Cardiac septum (tissue), 1 donor: ENCODE measurements at regions of chr2 and their contacts with region 1.

Region 1: GRCh38 chr2:73212448-73213176 is 1.4 kb upstream of the SMYD5 start:
- DNase-seq: peak; percentile 82

Region 2: GRCh38 chr2:73176881-73177644 is 35.5 kb before region 1 on chr2:
- intact Hi-C with region 1: loop called (anchors 5 kb)
- DNase-seq: peak; percentile 92

Region 3: DNA sequence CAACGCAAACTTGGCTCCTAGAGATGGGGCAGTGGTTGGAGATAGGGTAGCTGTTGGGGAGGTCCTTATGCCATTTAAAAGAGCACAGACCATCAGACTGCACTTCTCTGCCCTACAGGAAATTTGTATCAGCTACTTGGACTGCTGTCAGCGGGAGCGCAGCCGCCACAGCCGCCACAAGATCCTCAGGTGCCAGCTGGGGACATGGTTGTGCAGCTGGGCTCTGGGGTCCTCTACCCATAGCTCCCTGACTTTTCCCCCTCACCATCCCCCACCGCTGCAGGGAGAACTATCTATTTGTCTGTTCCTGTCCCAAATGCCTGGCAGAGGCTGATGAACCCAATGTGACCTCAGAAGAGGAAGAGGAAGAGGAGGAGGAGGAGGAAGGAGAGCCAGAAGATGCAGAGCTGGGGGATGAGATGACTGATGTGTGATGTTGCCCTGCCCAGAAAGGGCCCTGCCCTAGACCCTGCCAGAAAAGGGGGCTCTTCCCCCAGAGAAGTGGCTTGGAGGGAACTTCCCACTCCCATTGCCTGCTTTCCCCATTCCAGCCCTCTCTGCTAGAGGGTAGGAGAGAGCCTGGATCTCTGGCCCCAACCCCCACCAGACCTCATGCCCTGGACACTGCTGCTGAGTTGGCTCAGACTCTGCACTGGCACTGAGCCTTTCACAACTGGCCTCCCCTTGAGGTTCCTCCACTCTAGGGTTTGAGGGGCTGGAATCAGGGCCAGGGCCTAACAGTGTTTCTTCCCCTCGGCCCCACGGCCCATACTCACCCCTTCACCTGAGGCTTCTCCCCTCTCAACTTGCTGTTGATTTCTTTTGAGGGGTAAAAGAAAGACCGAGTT is 13.1 kb after region 1 on chr2:
- intact Hi-C with region 1: no loop called
- DNase-seq: no peak